GM10248 (cell line): ENCODE measurements at regions of chr1 and their contacts with region 1.

Region 1: GRCh38 chr1:223133824-223134435 is 9.1 kb downstream of the TLR5 start:
- DNase-seq: peak; percentile 88
- CTCF ChIP-seq: peak; percentile 94

Region 2: GRCh38 chr1:223097713-223098112 is 36.2 kb before region 1 on chr1:
- CTCF ChIA-PET with region 1: interaction called, 11 read pairs
- POLR2A ChIA-PET with region 1: no interaction called
- DNase-seq: no peak
- CTCF ChIP-seq: no peak

Region 3: DNA sequence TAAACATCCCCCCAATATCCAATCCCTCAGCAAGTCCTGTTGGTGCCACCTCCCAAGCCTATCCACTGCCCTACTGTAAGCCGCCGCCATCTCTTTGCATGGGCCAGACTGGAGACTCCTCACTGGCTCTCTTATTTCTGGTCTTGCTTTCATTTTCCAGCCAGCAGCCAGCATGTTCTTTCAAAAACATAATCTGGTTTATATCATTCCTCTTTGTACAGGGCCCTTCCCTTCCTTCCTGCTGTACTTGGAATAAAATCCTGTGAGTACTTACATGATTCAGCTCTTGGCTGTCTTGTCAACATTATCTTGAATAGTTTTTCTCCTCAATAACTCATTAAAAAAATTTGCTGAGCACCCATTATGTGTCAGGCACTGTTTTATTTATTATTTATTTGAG is 19.1 kb before region 1 on chr1:
- CTCF ChIA-PET with region 1: interaction called, 16 read pairs
- POLR2A ChIA-PET with region 1: no interaction called
- DNase-seq: no peak
- CTCF ChIP-seq: no peak

Region 4: DNA sequence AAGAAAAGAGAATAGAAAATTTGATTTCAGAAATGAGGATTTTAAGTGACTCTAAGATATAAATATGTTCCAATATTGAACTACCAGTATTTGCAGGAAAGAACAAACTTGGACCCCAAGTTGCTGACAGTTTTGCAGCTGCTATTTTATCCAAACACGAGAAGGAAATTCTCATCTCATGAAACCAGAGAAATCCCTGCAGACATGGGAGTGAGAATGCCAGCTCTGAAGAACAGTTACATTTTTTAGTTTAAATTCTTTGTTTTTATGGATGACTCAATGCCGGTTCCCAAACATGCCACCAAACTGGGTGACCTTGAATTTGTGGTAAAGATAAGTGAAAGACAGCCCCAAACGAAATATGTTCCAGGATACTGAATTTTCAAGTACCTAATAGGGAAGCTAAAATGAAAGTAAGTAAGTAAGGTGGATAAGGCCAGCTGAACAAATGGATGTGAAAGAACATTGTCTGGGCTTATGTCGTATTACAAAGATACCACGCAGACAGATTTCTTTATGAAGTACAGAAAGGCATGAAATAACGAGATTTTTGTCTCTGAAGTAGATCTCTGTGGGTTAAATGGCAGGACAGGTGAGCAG is 10.8 kb before region 1 on chr1:
- CTCF ChIA-PET with region 1: interaction called, 107 read pairs
- POLR2A ChIA-PET with region 1: no interaction called
- DNase-seq: no peak
- CTCF ChIP-seq: no peak

Region 5: DNA sequence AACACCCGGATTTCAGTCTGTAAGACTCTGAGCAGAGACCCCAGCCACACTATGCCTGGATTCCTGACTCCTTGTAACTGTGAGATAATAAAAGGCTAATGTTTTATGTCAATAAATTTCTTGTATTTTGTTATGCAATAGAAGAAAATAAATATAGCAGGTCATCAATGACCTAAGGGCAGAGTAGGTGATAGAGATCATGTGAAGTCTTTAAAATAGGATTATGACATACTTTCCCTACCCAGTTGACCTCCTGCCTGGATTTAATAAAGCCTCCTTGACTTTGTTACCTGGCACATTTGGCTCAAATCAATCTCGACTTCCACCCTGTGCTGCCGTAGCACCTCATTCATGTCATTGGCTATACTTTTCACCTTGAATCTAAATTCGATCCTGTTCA is 15.1 kb after region 1 on chr1:
- CTCF ChIA-PET with region 1: interaction called, 35 read pairs
- POLR2A ChIA-PET with region 1: no interaction called
- DNase-seq: no peak
- CTCF ChIP-seq: no peak

Region 6: GRCh38 chr1:223683586-223684487 is 549.9 kb after region 1 on chr1:
- CTCF ChIA-PET with region 1: interaction called, 23 read pairs
- POLR2A ChIA-PET with region 1: no interaction called
- DNase-seq: peak; percentile 31
- CTCF ChIP-seq: peak; percentile 53